HEK293 (cell line): ENCODE measurements at regions of chr11 and their contacts with region 1.

Region 1: DNA sequence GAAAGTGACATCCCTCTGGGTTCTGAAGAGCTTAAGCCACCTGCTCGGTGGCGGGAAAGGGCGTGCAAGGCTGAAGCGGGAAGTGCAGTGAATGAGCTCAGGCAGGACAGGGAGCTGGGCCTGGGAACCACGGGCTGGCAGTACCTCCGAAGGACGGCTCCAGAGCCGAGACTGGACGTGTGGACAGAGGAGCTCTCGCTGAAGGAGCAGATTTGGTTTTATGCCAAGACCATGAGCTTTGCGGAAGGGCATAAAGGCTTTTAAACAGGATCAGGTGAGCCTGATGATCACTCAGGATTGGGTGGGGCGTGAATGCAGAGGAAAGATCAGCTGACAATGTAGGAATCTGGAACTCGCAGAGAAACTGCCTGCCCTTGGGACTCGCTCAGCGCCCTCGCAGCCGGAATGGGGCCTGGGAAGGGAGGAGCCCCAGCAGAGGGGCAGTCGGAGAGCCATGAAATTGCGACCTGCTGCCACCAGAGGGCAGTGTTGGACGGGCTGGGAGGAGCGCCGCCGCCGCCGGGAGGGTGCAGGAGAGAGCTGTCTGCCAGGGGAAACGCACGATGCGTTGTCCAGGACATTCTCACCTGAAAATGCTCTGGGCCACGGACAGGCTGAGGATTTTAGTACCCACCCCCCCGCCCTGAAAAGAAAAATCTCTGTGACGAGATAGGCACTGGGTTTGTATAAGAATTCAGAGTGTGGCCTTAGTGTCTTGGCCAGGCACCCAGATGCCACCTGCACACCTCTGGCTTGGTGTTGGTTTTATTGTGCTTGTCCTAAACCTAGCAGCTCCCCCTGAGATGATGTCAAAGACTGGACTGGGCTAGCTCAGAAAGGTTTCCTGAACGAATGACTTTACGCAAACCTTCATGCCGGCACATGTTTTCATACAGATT is 324.4 kb downstream of the NTM start:
- H3K4me3 ChIP-seq: no peak overlapping the region
- H3K27ac ChIP-seq: no peak overlapping the region
- H3K4me1 ChIP-seq: no peaks in the 10 kb centered on the region; the same call in 1 of the 2 replicates
- CTCF ChIP-seq: peak; percentile 59

Region 2: DNA sequence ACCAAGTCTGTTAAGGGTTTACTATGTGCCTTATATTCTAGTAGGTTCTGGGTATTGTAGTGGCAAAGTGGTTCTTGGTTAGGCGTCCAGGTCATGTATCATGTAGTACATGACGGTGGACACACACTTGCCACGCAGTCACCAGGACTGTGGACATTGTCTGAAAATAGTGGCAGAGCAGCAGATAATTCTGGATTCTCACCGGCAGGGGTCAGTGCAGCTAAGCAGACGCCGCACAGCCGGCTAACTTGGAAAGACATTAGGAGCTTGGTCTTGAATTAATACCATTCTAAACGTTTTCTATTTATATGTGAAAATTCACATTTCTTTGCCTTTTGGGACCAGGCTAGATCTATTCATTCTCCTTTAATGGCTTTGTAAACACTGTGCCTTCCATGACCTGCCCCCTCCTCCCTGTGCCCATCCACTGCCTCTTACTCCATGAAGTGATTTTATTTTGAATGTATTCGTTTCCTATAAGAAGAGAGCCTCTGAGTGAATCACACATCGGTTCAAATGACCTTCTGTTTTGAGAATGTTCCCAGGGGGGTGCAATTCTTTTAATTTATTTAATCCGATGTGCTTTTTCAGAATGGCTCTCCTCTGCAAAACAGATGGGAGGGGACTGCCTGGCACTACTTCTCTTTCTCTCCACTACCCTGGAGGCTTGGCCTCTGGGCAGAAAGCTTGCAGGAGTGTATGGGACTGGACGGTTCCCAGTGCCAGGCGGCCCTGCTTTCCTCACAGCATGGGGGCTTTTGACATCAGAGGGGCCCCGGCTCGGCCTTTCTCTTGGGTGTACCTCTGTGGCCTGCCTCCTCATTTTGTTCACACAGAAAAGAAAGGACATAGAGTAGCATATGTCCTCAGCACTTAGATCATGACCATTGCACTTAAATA is 53.6 kb after region 1 on chr11:
- CTCF ChIA-PET with region 1: interaction called, 19 read pairs
- POLR2A ChIA-PET with region 1: no interaction called
- H3K4me3 ChIP-seq: no peak overlapping the region
- H3K27ac ChIP-seq: no peak overlapping the region
- H3K4me1 ChIP-seq: no peaks in the 10 kb centered on the region
- CTCF ChIP-seq: no peak

Region 3: GRCh38 chr11:131763193-131763890 is 68.6 kb after region 1 on chr11:
- CTCF ChIA-PET with region 1: interaction called, 13 read pairs
- POLR2A ChIA-PET with region 1: no interaction called
- H3K4me3 ChIP-seq: no peak overlapping the region
- H3K27ac ChIP-seq: no peak overlapping the region
- H3K4me1 ChIP-seq: no peaks in the 10 kb centered on the region
- CTCF ChIP-seq: no peak

Region 4: GRCh38 chr11:131838016-131838415 is 143.2 kb after region 1 on chr11:
- CTCF ChIA-PET with region 1: no interaction called
- POLR2A ChIA-PET with region 1: no interaction called
- H3K4me3 ChIP-seq: no peak overlapping the region
- H3K27ac ChIP-seq: no peak overlapping the region
- H3K4me1 ChIP-seq: no peaks in the 10 kb centered on the region
- CTCF ChIP-seq: no peak

Region 5: GRCh38 chr11:131910523-131911387 is 216.0 kb after region 1 on chr11:
- CTCF ChIA-PET with region 1: interaction called, 27 read pairs
- POLR2A ChIA-PET with region 1: no interaction called
- H3K4me3 ChIP-seq: peak overlapping the region; percentile 42
- H3K27ac ChIP-seq: peak overlapping the region; percentile 39; the same call in 1 of the 2 replicates
- H3K4me1 ChIP-seq: no peaks in the 10 kb centered on the region
- CTCF ChIP-seq: no peak